ENCODE measurements at regions of chr1 and their contacts with region 1.

Region 1: GRCh38 chr1:13469343-13469742 is 44.5 kb downstream of the LRRC38 start:
- DNase-seq: no peak
- ATAC-seq: peak in 5 of 8 donors; percentile 20 to 76 (median 68)
- H3K4me3 ChIP-seq: no peak overlapping the region
- H3K27ac ChIP-seq: no peak overlapping the region
- H3K4me1 ChIP-seq: no peaks in the 10 kb centered on the region
- H3K27me3 ChIP-seq: peaks cover 0 to 4% (median 0%) of the 10 kb centered on the region in 7 donors
- CTCF ChIP-seq: peak in 6 of 9 donors; percentile 16 to 52 (median 45)

Region 2: GRCh38 chr1:13543451-13544220 is 74.3 kb after region 1 on chr1:
- intact Hi-C with region 1: loop called in 3 of 10 experiments (anchors 2 to 10 kb)
- DNase-seq: peak; percentile 67 to 69
- ATAC-seq: peak; percentile 62 to 83 (median 76)
- H3K4me3 ChIP-seq: peak overlapping the region in 1 of 10 donors; percentile 11
- H3K27ac ChIP-seq: peak overlapping the region; percentile 49 to 89 (median 82)
- H3K4me1 ChIP-seq: peaks cover 0 to 33% (median 5%) of the 10 kb centered on the region in 9 donors
- H3K27me3 ChIP-seq: peaks cover 0 to 3% (median 0%) of the 10 kb centered on the region in 7 donors
- CTCF ChIP-seq: peak in 8 of 9 donors; percentile 31 to 74 (median 56)

Region 3: GRCh38 chr1:13549521-13549920 is 80.2 kb after region 1 on chr1:
- intact Hi-C with region 1: loop called in 3 of 10 experiments (anchors 2 to 10 kb)
- DNase-seq: no peak
- ATAC-seq: no peak
- H3K4me3 ChIP-seq: no peak overlapping the region
- H3K27ac ChIP-seq: no peak overlapping the region
- H3K4me1 ChIP-seq: peaks cover 0 to under 1% (median 0%) of the 10 kb centered on the region in 9 donors
- H3K27me3 ChIP-seq: no peaks in the 10 kb centered on the region
- CTCF ChIP-seq: no peak